ENCODE measurements at regions of chr9 and their contacts with region 1.

Region 1: GRCh38 chr9:71614409-71615010 is 153.8 kb downstream of the CEMIP2 start:
- DNase-seq: no peak
- ATAC-seq: no peak
- H3K4me3 ChIP-seq: no peak overlapping the region
- H3K27ac ChIP-seq: no peak overlapping the region
- H3K4me1 ChIP-seq: no peaks in the 10 kb centered on the region
- H3K27me3 ChIP-seq: no peaks in the 10 kb centered on the region

Region 2: GRCh38 chr9:71741711-71742648 is 127.5 kb after region 1 on chr9:
- intact Hi-C with region 1: no loop called
- DNase-seq: no peak
- ATAC-seq: peak; percentile 24 to 60
- H3K4me3 ChIP-seq: no peak overlapping the region
- H3K27ac ChIP-seq: no peak overlapping the region
- H3K4me1 ChIP-seq: peaks cover 3% of the 10 kb centered on the region
- H3K27me3 ChIP-seq: no peaks in the 10 kb centered on the region

Region 3: GRCh38 chr9:71752928-71753327 is 138.4 kb after region 1 on chr9:
- intact Hi-C with region 1: loop called in 1 of 4 experiments (anchors 5 kb)
- DNase-seq: no peak
- ATAC-seq: no peak
- H3K4me3 ChIP-seq: no peak overlapping the region
- H3K27ac ChIP-seq: no peak overlapping the region
- H3K4me1 ChIP-seq: peaks cover 2% of the 10 kb centered on the region
- H3K27me3 ChIP-seq: no peaks in the 10 kb centered on the region